GM10248 (cell line): ENCODE measurements at regions of chr14 and their contacts with region 1.

Region 1: GRCh38 chr14:20613094-20614037 is 22.2 kb upstream of the RNASE12 start:
- DNase-seq: peak; percentile 74
- CTCF ChIP-seq: peak; percentile 68

Region 2: GRCh38 chr14:20343092-20343861 is 270.1 kb before region 1 on chr14 and contains the start of gene PARP2:
- CTCF ChIA-PET with region 1: interaction called, 5 read pairs
- POLR2A ChIA-PET with region 1: interaction called, 12 read pairs
- DNase-seq: peak; percentile 93
- CTCF ChIP-seq: no peak

Region 3: DNA sequence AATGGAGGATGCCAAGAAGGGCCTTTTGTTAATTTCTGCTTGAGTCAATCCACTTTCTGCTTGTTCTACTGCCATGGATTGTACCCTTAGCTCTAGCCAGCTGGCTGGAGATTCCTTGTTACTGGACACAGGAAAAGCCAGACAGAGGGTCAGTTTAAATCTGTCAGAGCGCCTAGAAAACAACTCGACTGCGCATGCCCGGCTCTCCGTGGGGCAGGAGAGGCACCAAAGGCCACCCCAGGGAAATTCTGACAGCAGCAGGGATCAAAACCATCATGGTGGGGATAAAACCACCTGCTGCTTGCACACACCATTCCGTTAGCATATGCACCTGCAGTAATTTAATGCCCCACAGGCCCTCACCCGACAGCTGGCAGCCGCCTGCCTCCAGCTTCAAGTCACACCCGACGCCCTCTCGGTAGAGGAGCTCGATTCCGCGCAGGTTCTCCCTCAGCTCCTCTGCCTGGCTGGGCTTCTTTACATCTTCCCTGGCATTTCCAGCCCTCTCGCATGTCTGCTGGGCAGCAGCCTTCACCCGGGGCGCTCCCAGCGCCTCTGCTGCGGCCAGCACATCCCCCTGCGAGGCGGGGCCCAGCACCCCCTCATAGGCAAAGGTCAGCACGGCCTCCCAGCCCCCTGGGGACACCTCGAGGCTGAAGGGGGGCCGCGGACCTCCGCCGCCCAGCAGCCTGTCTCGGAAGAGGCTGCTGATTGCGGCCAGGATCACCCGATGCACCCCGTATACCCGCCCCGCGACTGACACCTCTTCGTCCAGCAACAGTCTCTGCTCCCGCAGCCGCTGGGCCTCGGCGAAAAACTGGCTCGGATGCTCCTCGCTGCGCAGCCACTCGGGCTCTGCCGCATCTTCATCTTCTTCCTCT is 178.4 kb before region 1 on chr14:
- CTCF ChIA-PET with region 1: no interaction called
- POLR2A ChIA-PET with region 1: no interaction called
- DNase-seq: no peak
- CTCF ChIP-seq: no peak

Region 4: DNA sequence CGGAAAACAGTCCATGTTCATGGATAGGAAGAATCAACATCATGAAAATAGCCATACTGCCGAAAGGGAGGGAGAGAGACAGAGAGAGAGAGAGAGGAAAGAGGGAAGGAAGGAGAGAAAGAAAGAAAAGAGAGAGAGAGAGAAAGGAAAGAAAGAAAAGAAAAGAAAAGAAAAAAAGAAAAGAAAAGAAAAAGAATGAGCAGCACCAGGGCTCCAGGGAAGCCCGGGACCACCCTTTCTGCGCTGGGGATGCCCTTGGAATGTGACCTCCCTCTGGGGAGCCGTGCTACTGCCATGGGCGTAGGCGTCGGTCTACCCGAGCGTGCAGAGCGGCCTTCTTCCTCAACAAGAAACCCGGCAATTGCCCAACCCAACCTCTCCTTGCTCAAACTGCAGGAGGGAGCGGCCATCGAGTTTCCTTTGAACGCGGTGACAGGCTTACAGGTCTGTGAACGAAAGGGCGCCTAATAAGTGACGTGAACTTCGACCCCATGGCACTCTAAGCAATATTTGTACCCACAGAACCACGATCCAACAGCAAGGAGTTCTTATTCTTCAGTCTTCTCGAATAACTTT is 11.2 kb after region 1 on chr14:
- CTCF ChIA-PET with region 1: interaction called, 21 read pairs
- POLR2A ChIA-PET with region 1: no interaction called
- DNase-seq: peak; percentile 56
- CTCF ChIP-seq: no peak

Region 5: GRCh38 chr14:20657216-20658128 is 44.1 kb after region 1 on chr14:
- CTCF ChIA-PET with region 1: interaction called, 11 read pairs
- POLR2A ChIA-PET with region 1: no interaction called
- DNase-seq: no peak
- CTCF ChIP-seq: no peak

Region 6: DNA sequence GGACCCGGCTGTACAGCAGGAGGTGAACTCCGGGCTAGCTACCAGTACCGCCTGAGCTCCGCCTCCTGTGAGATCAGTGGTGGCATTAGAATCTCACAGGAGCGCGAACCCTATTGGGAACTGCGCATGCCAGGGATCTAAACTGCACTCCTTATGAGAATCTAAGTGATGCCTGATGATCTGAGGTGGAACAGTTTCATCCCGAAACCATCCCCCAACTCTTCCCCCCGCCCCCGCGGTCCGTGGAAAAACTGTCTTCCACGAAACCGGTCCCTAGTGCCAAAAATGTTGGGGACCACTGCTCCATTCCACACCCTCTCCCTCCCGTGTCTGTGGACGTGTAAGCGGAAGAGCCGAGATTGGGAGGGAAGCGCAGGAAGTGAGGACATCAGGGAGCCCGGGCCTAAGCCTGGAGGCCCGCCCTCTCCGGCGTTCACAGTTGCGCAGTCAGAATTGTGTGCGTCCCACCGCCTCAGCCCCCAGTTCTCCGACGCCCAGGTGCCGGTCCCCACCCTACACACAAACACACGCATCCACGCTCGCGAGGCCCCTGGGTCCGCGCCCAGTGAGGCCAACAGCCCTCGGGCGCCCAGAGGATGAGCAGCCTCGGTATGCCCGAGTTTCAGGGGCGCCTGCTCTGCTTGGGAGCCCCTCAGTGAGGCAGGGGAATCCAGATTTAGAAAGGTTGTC is 69.2 kb after region 1 on chr14:
- CTCF ChIA-PET with region 1: interaction called, 49 read pairs
- POLR2A ChIA-PET with region 1: interaction called, 6 read pairs
- DNase-seq: peak; percentile 84
- CTCF ChIP-seq: no peak

Region 7: GRCh38 chr14:20732979-20733635 is 119.7 kb after region 1 on chr14:
- CTCF ChIA-PET with region 1: no interaction called
- POLR2A ChIA-PET with region 1: no interaction called
- DNase-seq: no peak
- CTCF ChIP-seq: no peak